Thyroid gland (tissue), 4 donors: ENCODE measurements at regions of chr3 and their contacts with region 1.

Region 1: DNA sequence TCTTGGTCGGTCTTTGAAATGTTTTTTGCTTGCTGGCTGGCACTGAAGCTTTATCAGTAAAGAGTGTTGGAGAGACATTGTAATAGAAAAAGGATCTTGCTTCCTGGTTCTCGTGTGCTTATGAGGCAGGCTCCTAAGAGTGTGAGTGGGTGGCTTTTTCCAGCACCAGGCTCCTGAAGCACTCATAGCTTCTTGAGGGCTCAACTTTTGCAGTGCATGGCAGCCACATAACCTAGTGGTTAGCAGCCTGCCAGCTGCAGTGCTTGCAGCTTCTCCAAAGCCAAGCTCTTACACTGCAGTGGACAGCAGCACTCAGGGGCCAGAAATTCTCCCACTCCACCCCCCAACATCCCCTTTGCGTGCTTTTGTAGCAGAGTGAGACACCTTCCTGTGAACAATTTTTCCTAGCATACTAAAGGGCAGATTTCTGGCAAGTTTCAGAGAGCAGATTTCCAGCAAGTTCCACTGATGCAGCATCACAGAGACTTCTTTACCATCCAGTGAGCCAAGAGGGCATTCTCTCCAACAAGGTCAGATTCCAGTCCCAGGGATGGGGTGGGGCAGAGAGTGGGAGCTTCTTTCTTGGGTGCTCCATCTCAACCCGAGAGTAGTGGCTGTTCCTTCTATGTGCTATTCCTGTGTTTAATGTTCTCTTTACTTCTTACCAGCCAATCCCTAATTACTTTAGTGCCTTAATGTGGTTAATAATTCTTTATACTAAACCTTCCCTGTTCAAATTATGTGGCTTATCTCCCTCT is 15.8 kb upstream of the ARHGEF26 start:
- DNase-seq: peak; percentile 77 to 82
- H3K4me3 ChIP-seq: no peak overlapping the region
- H3K27ac ChIP-seq: no peak overlapping the region
- H3K4me1 ChIP-seq: peaks cover 0 to 5% of the 10 kb centered on the region in 2 donors
- H3K27me3 ChIP-seq: no peaks in the 10 kb centered on the region
- CTCF ChIP-seq: no peak
- POLR2A ChIP-seq: no peak

Region 2: GRCh38 chr3:154252759-154253638 is 147.6 kb after region 1 on chr3:
- intact Hi-C with region 1: loop called (anchors 10 kb)
- DNase-seq: peak; percentile 90 to 95
- H3K4me3 ChIP-seq: no peak overlapping the region
- H3K27ac ChIP-seq: no peak overlapping the region
- H3K4me1 ChIP-seq: no peaks in the 10 kb centered on the region
- H3K27me3 ChIP-seq: no peaks in the 10 kb centered on the region
- CTCF ChIP-seq: peak; percentile 74 to 94 (median 84)
- POLR2A ChIP-seq: no peak